OCI-LY7 (cell line): ENCODE measurements at regions of chr15 and their contacts with region 1.

Region 1: GRCh38 chr15:40274350-40275274 is 8.3 kb downstream of the ANKRD63 start:
- DNase-seq: peak; percentile 88
- H3K4me3 ChIP-seq: no peak overlapping the region
- H3K27ac ChIP-seq: no peak overlapping the region
- H3K4me1 ChIP-seq: peaks cover 13% of the 10 kb centered on the region
- CTCF ChIP-seq: peak; percentile 100

Region 2: GRCh38 chr15:39782441-39783138 is 492.0 kb before region 1 on chr15 and contains the start of gene FSIP1:
- CTCF ChIA-PET with region 1: no interaction called
- POLR2A ChIA-PET with region 1: no interaction called
- intact Hi-C with region 1: loop called (anchors 5 kb)
- DNase-seq: peak; percentile 98
- H3K4me3 ChIP-seq: peak within 1 kb of the TSS; percentile 84
- H3K27ac ChIP-seq: peak within 1 kb of the TSS; percentile 13
- H3K4me1 ChIP-seq: peaks cover 18% of the 10 kb centered on the region
- CTCF ChIP-seq: no peak
- total RNA-seq, gene FSIP1: 0.21 and 0.28 TPM in 2 replicates

Region 3: GRCh38 chr15:40044717-40045571 is 229.7 kb before region 1 on chr15:
- CTCF ChIA-PET with region 1: interaction called, 7 read pairs
- POLR2A ChIA-PET with region 1: interaction called, 3 read pairs
- intact Hi-C with region 1: loop called (anchors 1 kb)
- DNase-seq: peak; percentile 87
- H3K4me3 ChIP-seq: no peak overlapping the region
- H3K27ac ChIP-seq: peak overlapping the region; percentile 15
- H3K4me1 ChIP-seq: peaks cover 68% of the 10 kb centered on the region
- CTCF ChIP-seq: peak; percentile 97

Region 4: GRCh38 chr15:40130799-40131502 is 143.7 kb before region 1 on chr15:
- CTCF ChIA-PET with region 1: no interaction called
- POLR2A ChIA-PET with region 1: no interaction called
- intact Hi-C with region 1: no loop called
- DNase-seq: peak; percentile 20
- H3K4me3 ChIP-seq: no peak overlapping the region
- H3K27ac ChIP-seq: no peak overlapping the region
- H3K4me1 ChIP-seq: no peaks in the 10 kb centered on the region
- CTCF ChIP-seq: no peak

Region 5: DNA sequence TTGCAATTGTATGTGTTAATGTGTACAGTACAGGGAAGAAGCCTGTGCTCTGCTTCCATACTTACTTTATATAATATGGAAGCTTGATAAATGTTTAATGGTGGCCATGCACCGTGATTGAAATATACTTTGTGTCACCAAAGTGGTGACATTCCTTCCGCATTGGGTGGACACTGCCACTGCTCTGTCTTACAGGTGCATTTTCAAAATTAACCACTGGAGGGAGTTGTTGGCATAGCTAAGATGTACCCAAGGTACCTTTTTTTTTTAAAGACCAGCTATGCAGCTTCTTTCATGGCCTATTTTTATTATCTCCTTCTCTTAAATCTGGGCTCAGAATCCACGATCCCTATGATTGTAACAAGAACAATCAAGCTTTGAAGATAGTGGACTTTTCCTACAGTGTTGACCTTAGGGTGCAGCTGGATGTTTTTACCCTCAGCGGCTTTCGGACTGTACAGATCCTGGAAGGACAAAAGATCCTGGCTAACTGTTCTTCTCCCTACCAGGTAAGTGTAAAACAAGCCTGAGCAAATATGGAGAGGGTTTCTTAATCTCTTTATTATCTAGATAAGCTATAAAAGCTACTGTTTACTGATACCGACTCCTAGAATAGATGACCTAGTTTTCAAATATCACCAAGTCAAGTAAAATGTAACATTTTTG is 57.3 kb before region 1 on chr15:
- CTCF ChIA-PET with region 1: interaction called, 4 read pairs
- POLR2A ChIA-PET with region 1: no interaction called
- intact Hi-C with region 1: loop called (anchors 1 kb)
- DNase-seq: peak; percentile 77
- H3K4me3 ChIP-seq: no peak overlapping the region
- H3K27ac ChIP-seq: no peak overlapping the region
- H3K4me1 ChIP-seq: no peaks in the 10 kb centered on the region
- CTCF ChIP-seq: peak; percentile 90

Region 6: GRCh38 chr15:40252438-40253166 is 22.0 kb before region 1 on chr15:
- CTCF ChIA-PET with region 1: no interaction called
- POLR2A ChIA-PET with region 1: no interaction called
- intact Hi-C with region 1: no loop called
- DNase-seq: no peak
- H3K4me3 ChIP-seq: no peak overlapping the region
- H3K27ac ChIP-seq: no peak overlapping the region
- H3K4me1 ChIP-seq: no peaks in the 10 kb centered on the region
- CTCF ChIP-seq: no peak

Region 7: DNA sequence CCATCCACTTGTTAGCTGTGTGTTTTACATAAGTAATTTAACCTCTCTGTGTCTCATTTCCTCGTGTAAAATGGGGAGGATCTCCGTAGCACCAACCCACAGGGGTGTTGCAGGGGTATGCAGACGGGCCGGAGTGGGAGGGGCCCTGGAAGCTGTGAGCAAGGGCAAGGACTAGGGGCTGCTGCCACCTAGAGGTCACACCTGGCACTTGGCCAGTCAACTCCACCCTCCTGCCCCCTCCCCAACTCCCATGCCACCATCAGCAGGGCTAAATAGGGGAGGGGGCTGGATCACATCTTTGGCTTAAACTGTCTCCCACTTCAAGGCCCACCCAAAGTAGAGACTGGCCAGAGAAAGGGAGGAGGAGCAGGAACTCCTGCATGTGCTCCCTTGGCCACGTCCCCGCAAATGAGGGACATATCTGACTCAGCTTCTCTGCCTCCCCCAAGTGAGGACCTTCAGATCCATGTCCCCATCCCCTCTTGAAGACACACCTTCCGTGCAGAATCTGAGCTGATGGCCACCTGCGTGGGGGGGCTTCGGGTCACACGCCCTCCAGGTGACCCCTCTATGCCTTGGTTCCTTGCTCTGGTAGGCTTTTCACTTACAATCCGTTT is 63.5 kb after region 1 on chr15:
- CTCF ChIA-PET with region 1: interaction called, 4 read pairs
- POLR2A ChIA-PET with region 1: no interaction called
- intact Hi-C with region 1: loop called (anchors 1 kb)
- DNase-seq: peak; percentile 81
- H3K4me3 ChIP-seq: no peak overlapping the region
- H3K27ac ChIP-seq: no peak overlapping the region
- H3K4me1 ChIP-seq: peaks cover 13% of the 10 kb centered on the region
- CTCF ChIP-seq: peak; percentile 94

Region 8: DNA sequence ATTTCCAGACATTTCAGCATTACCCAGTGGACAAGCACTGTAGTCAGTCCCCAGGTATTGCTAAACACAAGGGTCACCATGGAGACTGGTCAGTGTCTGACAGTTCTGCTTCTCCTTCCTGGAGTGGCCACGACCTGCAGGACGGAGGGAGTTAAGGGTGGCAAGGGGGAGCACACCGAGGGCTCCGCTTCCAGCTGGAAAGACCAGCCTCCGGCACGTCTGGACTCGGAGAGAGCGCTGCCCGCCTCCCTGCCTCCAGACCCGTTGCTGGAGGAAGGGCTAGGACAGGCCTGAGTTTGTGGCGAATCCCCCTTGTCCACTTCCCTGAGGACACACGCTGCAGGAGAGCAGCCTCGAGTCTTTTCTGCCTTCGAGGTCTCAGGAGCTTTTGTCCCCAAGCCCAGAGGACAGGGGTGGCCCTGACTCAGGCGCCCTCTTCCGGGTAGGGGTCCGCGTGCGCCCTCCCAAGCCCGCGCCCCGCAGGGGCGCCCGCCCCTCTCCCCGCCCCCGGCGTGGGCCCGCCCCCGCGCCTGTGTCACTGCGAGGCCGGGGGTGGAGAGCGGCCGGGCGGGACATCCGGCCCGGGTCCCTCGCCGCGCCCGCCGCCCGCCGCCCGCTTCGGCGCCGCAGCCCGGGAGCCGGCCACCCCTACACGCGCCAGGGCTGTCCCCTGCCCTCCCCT is 196.0 kb after region 1 on chr15 and contains the start of gene CHST14:
- CTCF ChIA-PET with region 1: no interaction called
- POLR2A ChIA-PET with region 1: no interaction called
- intact Hi-C with region 1: no loop called
- DNase-seq: peak; percentile 64
- H3K4me3 ChIP-seq: peak within 1 kb of the TSS; percentile 70
- H3K27ac ChIP-seq: no peak within 1 kb of the TSS
- H3K4me1 ChIP-seq: no peaks in the 10 kb centered on the region
- CTCF ChIP-seq: no peak
- total RNA-seq, gene CHST14: 5.6 and 7.3 TPM in 2 replicates